ENCODE measurements at regions of chr9 and their contacts with region 1.

Region 1: GRCh38 chr9:115008536-115009270 is 78.3 kb upstream of the TNFSF8 start:
- DNase-seq: peak; percentile 62
- ATAC-seq: peak; percentile 45
- H3K4me3 Mint-ChIP-seq: no peak overlapping the region
- H3K27ac Mint-ChIP-seq: peak overlapping the region; percentile 11
- H3K4me1 Mint-ChIP-seq: peaks cover 85% of the 10 kb centered on the region
- H3K27me3 Mint-ChIP-seq: no peaks in the 10 kb centered on the region

Region 2: GRCh38 chr9:114696814-114697544 is 311.7 kb before region 1 on chr9:
- CTCF ChIA-PET with region 1: interaction called, 4 read pairs
- POLR2A ChIA-PET with region 1: interaction called, 8 read pairs
- intact Hi-C with region 1: loop called in 1 of 2 experiments (anchors 1 kb)
- DNase-seq: peak; percentile 86
- ATAC-seq: peak; percentile 49
- H3K4me3 Mint-ChIP-seq: peak overlapping the region; percentile 28
- H3K27ac Mint-ChIP-seq: peak overlapping the region; percentile 89
- H3K4me1 Mint-ChIP-seq: peaks cover 89% of the 10 kb centered on the region
- H3K27me3 Mint-ChIP-seq: no peaks in the 10 kb centered on the region

Region 3: GRCh38 chr9:114738581-114739316 is 270.0 kb before region 1 on chr9:
- CTCF ChIA-PET with region 1: interaction called, 12 read pairs
- POLR2A ChIA-PET with region 1: interaction called, 3 read pairs
- intact Hi-C with region 1: no loop called
- DNase-seq: peak; percentile 80
- ATAC-seq: peak; percentile 70
- H3K4me3 Mint-ChIP-seq: no peak overlapping the region
- H3K27ac Mint-ChIP-seq: peak overlapping the region; percentile 84
- H3K4me1 Mint-ChIP-seq: peaks cover 56% of the 10 kb centered on the region
- H3K27me3 Mint-ChIP-seq: no peaks in the 10 kb centered on the region

Region 4: GRCh38 chr9:114958021-114958843 is 50.5 kb before region 1 on chr9:
- CTCF ChIA-PET with region 1: interaction called, 5 read pairs
- POLR2A ChIA-PET with region 1: no interaction called
- intact Hi-C with region 1: loop called (anchors 2 kb)
- DNase-seq: peak; percentile 68
- ATAC-seq: peak; percentile 83
- H3K4me3 Mint-ChIP-seq: peak overlapping the region; percentile 68
- H3K27ac Mint-ChIP-seq: peak overlapping the region; percentile 96
- H3K4me1 Mint-ChIP-seq: peaks cover 56% of the 10 kb centered on the region
- H3K27me3 Mint-ChIP-seq: no peaks in the 10 kb centered on the region

Region 5: GRCh38 chr9:115035841-115036612 is 27.3 kb after region 1 on chr9:
- CTCF ChIA-PET with region 1: no interaction called
- POLR2A ChIA-PET with region 1: no interaction called
- intact Hi-C with region 1: loop called in 1 of 2 experiments (anchors 2 kb)
- DNase-seq: peak; percentile 71
- ATAC-seq: peak; percentile 87
- H3K4me3 Mint-ChIP-seq: peak overlapping the region; percentile 1
- H3K27ac Mint-ChIP-seq: peak overlapping the region; percentile 84
- H3K4me1 Mint-ChIP-seq: peaks cover 24% of the 10 kb centered on the region
- H3K27me3 Mint-ChIP-seq: peaks cover 7% of the 10 kb centered on the region